ENCODE measurements at regions of chr22 and their contacts with region 1.

Region 1: GRCh38 chr22:37561212-37562048 is 1.1 kb downstream of the CDC42EP1 start:
- DNase-seq: peak; percentile 94
- H3K4me3 ChIP-seq: peak overlapping the region; percentile 56 to 75
- H3K27ac ChIP-seq: peak overlapping the region in 1 of 2 experiments; percentile 96; a peak in 2 of 4 replicates
- H3K4me1 ChIP-seq: peaks cover 10 to 28% of the 10 kb centered on the region in 2 experiments; a peak in 3 of 4 replicates
- H3K27me3 ChIP-seq: no peaks in the 10 kb centered on the region
- CTCF ChIP-seq: peak; percentile 89
- EP300 ChIP-seq: no peak
- RAD21 ChIP-seq: peak; percentile 27; the same call in 1 of the 2 replicates

Region 2: DNA sequence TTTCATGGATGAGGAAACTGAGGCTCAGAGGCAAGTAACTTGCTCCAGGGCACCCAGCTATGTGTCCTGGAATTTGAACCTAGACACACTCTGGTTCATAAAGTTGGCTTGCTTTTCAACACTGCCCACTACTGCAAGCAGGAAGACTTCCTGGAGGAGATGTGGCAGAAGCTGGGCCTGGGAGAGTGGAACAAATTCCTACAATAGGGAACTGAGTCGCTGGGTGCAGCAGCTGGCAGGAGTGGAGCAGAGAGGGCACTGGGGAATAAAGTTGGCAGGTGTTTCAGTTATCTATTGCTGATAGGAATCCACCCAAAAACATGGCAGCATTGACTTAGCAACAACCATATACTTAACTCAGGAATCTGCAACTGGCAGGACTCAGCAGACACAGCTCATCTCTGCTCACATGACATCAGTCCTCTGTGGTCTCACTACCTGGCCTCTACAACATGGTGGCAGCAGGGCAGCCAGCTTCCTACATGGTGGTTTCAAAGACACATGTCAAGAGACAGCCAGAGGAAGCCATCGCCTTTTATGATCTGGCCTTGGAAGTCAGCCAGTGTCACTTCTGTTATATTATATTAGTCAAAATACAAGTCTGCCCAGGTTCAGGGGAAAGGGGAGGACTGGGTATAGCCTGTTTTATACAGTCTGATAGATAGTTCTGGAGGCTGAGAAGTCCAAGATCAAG is 31.6 kb before region 1 on chr22:
- CTCF ChIA-PET with region 1: interaction called, 27 read pairs
- POLR2A ChIA-PET with region 1: no interaction called
- DNase-seq: peak; percentile 20
- H3K4me3 ChIP-seq: no peak overlapping the region
- H3K27ac ChIP-seq: no peak overlapping the region
- H3K4me1 ChIP-seq: peaks cover 3 to 10% of the 10 kb centered on the region in 2 experiments; a peak in 3 of 4 replicates
- H3K27me3 ChIP-seq: no peaks in the 10 kb centered on the region
- CTCF ChIP-seq: no peak
- EP300 ChIP-seq: no peak
- RAD21 ChIP-seq: no peak

Region 3: DNA sequence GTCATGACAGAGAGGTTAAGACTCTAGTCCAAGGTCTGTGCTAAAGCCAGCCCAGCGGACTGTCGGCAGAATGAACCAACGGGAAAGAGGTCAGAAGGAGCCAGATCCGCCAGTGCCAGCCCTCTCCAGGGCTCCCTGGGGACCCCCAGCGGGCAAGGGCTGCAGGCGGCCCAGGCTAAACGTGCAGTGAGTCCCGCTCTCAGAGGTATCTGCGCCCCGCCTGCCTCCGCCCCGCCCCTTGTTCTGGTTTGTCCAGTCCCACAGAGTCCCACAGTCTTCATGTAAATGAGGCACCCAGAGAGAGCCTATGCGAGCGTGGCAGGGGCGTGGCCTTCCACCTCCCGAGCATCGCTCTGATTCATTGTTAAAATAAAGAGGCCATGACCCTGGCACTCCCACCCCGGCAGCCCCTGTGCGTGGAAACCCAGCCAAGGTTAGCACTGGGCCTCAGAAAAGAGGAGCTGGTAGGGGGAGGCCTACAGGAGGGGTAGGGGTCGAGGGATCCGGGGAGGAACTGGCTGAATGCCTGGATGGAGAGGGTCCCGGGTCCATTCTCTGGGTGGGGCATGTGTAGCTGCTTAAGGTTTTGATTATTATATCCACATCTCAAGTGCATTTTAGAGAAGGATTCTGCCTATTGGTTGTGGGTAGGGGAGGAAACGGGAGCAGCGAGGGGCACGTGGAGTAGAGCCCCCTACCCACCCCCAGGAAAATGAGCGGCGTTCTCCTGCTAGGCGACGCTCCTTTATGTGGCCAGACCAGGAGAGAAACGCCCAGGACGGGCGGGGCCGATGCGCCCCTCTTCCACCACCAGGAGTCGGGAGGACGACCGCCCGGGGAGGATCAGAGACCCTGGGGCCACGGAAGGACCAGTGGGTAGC is 135.5 kb after region 1 on chr22 and contains the start of gene TRIOBP:
- CTCF ChIA-PET with region 1: no interaction called
- POLR2A ChIA-PET with region 1: no interaction called
- DNase-seq: peak; percentile 95
- H3K4me3 ChIP-seq: peak within 1 kb of the TSS; percentile 57 to 82
- H3K27ac ChIP-seq: peak within 1 kb of the TSS; percentile 57 to 80
- H3K4me1 ChIP-seq: peaks cover 6 to 11% of the 10 kb centered on the region in 2 experiments; a peak in 2 of 4 replicates
- H3K27me3 ChIP-seq: no peaks in the 10 kb centered on the region
- CTCF ChIP-seq: peak; percentile 61
- EP300 ChIP-seq: peak in 1 of 2 experiments; percentile 24; a peak in 1 of 4 replicates
- RAD21 ChIP-seq: peak; percentile 64
- polyA plus RNA-seq, gene TRIOBP: 43.6 and 47.3 TPM in 2 replicates